Naive thymus-derived CD4-positive, alpha-beta T cell (primary cell): ENCODE measurements at regions of chr14 and their contacts with region 1.

Region 1: GRCh38 chr14:105020815-105021655 is at the start of gene CDCA4:
- DNase-seq: peak; percentile 93 to 98 (median 97)
- ATAC-seq: peak; percentile 91
- H3K4me3 ChIP-seq: peak within 1 kb of the TSS; percentile 97
- H3K4me3 Mint-ChIP-seq: peak within 1 kb of the TSS; percentile 88 to 99 (median 92)
- H3K27ac ChIP-seq: peak within 1 kb of the TSS; percentile 94
- H3K27ac Mint-ChIP-seq: peak within 1 kb of the TSS; percentile 81 to 97 (median 92)
- H3K4me1 ChIP-seq: peaks cover 25 to 54% of the 10 kb centered on the region in 2 donors
- H3K4me1 Mint-ChIP-seq: peaks cover 38 to 62% (median 41%) of the 10 kb centered on the region in 7 donors
- H3K27me3 ChIP-seq: no peaks in the 10 kb centered on the region
- H3K27me3 Mint-ChIP-seq: no peaks in the 10 kb centered on the region
- total RNA-seq, gene CDCA4: 12.7 to 47.8 (median 14.0) TPM

Region 2: GRCh38 chr14:104624939-104625338 is 396.1 kb before region 1 on chr14:
- CTCF ChIA-PET with region 1: no interaction called
- POLR2A ChIA-PET with region 1: no interaction called
- intact Hi-C with region 1: no loop called
- DNase-seq: no peak
- ATAC-seq: no peak
- H3K4me3 ChIP-seq: no peak overlapping the region
- H3K4me3 Mint-ChIP-seq: no peak overlapping the region
- H3K27ac ChIP-seq: no peak overlapping the region
- H3K27ac Mint-ChIP-seq: no peak overlapping the region
- H3K4me1 ChIP-seq: no peaks in the 10 kb centered on the region
- H3K4me1 Mint-ChIP-seq: peaks cover 0 to 2% (median 0%) of the 10 kb centered on the region in 7 donors
- H3K27me3 ChIP-seq: no peaks in the 10 kb centered on the region
- H3K27me3 Mint-ChIP-seq: peaks cover 14 to 35% (median 31%) of the 10 kb centered on the region in 5 donors

Region 3: DNA sequence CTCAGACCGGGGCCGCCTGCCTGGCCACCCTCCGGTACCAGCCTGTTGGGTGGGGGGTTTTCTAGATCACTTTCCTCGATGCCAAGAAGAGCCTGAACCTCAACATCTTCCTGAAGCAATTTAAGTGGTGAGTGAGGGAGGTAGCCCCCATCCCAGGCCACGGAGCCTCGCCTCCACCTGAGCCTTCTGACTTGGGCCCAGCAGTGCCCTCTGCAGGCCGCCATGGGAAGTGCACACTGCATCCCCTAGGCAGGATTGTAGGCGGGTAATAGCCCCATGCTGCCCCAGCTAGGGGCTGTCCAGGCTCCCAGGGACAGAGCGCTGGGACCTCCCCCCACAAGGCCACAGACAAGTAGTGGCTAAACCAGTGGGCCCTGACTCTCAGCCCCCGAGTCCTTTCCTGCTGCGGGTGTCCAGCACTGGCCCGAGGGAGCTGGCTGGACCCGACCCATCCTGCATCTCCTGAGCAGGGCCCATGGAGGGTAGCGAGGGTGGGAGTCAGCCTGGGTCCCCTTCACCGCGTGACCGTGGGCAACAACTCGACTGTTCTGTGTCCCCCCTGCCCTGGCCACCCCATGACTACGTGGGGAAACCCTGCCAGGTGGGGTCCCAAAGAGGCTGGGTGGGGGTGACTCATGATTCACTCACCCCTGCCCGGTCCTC is 312.3 kb before region 1 on chr14:
- CTCF ChIA-PET with region 1: no interaction called
- POLR2A ChIA-PET with region 1: no interaction called
- intact Hi-C with region 1: no loop called
- DNase-seq: peak; percentile 51 to 81 (median 66)
- ATAC-seq: peak; percentile 90
- H3K4me3 ChIP-seq: no peak overlapping the region
- H3K4me3 Mint-ChIP-seq: no peak overlapping the region
- H3K27ac ChIP-seq: no peak overlapping the region
- H3K27ac Mint-ChIP-seq: peak overlapping the region in 5 of 9 donors; percentile 32 to 71 (median 52)
- H3K4me1 ChIP-seq: no peaks in the 10 kb centered on the region
- H3K4me1 Mint-ChIP-seq: peaks cover 0 to 5% (median 4%) of the 10 kb centered on the region in 7 donors
- H3K27me3 ChIP-seq: no peaks in the 10 kb centered on the region
- H3K27me3 Mint-ChIP-seq: no peaks in the 10 kb centered on the region

Region 4: GRCh38 chr14:104800015-104800770 is 220.8 kb before region 1 on chr14:
- CTCF ChIA-PET with region 1: no interaction called
- POLR2A ChIA-PET with region 1: no interaction called
- intact Hi-C with region 1: loop called in 1 of 2 experiments (anchors 1 kb)
- DNase-seq: peak in 8 of 9 donors; percentile 55 to 85 (median 68)
- ATAC-seq: peak; percentile 82
- H3K4me3 ChIP-seq: peak overlapping the region; percentile 41
- H3K4me3 Mint-ChIP-seq: peak overlapping the region; percentile 59 to 90 (median 73)
- H3K27ac ChIP-seq: peak overlapping the region; percentile 70
- H3K27ac Mint-ChIP-seq: peak overlapping the region; percentile 32 to 94 (median 88)
- H3K4me1 ChIP-seq: peaks cover 20 to 27% of the 10 kb centered on the region in 2 donors
- H3K4me1 Mint-ChIP-seq: peaks cover 16 to 47% (median 32%) of the 10 kb centered on the region in 7 donors
- H3K27me3 ChIP-seq: no peaks in the 10 kb centered on the region
- H3K27me3 Mint-ChIP-seq: peaks cover 0 to 2% (median 0%) of the 10 kb centered on the region in 5 donors

Region 5: GRCh38 chr14:104976198-104977007 is 44.6 kb before region 1 on chr14:
- CTCF ChIA-PET with region 1: interaction called, 5 read pairs
- POLR2A ChIA-PET with region 1: interaction called, 6 read pairs
- intact Hi-C with region 1: loop called in 1 of 2 experiments (anchors 1 kb)
- DNase-seq: peak; percentile 67 to 91 (median 83)
- ATAC-seq: peak; percentile 86
- H3K4me3 ChIP-seq: no peak overlapping the region
- H3K4me3 Mint-ChIP-seq: peak overlapping the region; percentile 41 to 92 (median 72)
- H3K27ac ChIP-seq: no peak overlapping the region
- H3K27ac Mint-ChIP-seq: peak overlapping the region in 4 of 9 donors; percentile 3 to 68 (median 33)
- H3K4me1 ChIP-seq: peaks cover 0 to 7% of the 10 kb centered on the region in 2 donors
- H3K4me1 Mint-ChIP-seq: peaks cover 5 to 19% (median 13%) of the 10 kb centered on the region in 7 donors
- H3K27me3 ChIP-seq: peaks cover 0 to 8% of the 10 kb centered on the region in 2 donors
- H3K27me3 Mint-ChIP-seq: peaks cover 8 to 33% (median 16%) of the 10 kb centered on the region in 5 donors

Region 6: GRCh38 chr14:105034314-105035039 is 13.4 kb after region 1 on chr14:
- CTCF ChIA-PET with region 1: no interaction called
- POLR2A ChIA-PET with region 1: interaction called, 11 read pairs
- intact Hi-C with region 1: loop called in 1 of 2 experiments (anchors 1 kb)
- DNase-seq: no peak
- ATAC-seq: peak; percentile 60
- H3K4me3 ChIP-seq: no peak overlapping the region
- H3K4me3 Mint-ChIP-seq: peak overlapping the region in 9 of 10 donors; percentile 79 to 98 (median 95)
- H3K27ac ChIP-seq: no peak overlapping the region
- H3K27ac Mint-ChIP-seq: peak overlapping the region in 8 of 9 donors; percentile 82 to 99 (median 94)
- H3K4me1 ChIP-seq: peaks cover 0 to 6% of the 10 kb centered on the region in 2 donors
- H3K4me1 Mint-ChIP-seq: peaks cover 9 to 31% (median 23%) of the 10 kb centered on the region in 7 donors
- H3K27me3 ChIP-seq: no peaks in the 10 kb centered on the region
- H3K27me3 Mint-ChIP-seq: peaks cover 0 to 7% (median 0%) of the 10 kb centered on the region in 5 donors

Region 7: DNA sequence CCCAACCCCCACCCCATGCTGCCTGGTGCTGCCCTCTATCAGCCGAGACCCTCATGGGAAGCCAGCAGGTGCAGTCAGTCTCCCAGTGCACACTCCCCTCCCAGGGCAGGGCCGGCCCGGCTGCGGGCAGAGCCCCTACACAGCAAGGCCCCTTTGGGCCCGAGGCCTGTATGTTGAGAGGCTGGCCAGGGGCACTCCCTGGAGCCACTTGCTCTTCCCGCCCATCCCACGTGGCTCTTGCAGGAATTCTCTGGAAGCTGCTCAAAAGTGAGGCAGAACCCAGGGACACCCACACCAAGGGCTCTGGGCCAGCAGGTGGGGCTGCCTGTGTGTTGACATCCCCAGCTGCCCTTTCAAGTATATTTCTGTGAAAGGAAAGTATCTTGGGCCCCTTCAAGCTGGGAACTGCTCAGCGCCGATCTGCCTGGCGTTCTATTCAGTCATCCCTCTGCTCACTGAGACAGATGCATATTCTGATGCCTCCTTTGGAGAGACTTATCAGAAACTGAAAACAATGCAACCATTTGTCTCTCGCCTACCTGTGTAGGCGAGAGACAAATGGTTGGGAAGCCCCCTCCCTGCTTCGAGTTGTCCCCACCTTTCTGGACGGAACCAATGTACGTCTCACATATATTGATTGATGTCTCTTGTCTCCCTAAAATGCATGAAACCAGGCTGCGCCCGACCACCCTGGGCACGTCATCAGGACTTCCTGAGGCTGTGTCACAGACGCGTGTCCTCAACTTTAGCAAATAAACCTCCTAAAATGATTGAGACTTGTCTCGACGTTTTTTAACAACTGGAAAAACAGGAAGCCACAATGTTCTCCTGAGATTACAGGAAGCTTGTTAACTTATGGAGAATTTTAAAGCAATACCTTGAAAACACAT is 38.2 kb after region 1 on chr14:
- CTCF ChIA-PET with region 1: no interaction called
- POLR2A ChIA-PET with region 1: interaction called, 5 read pairs
- intact Hi-C with region 1: loop called in 1 of 2 experiments (anchors 1 kb)
- DNase-seq: peak in 7 of 9 donors; percentile 74 to 91 (median 84)
- ATAC-seq: peak; percentile 67
- H3K4me3 ChIP-seq: peak overlapping the region; percentile 74
- H3K4me3 Mint-ChIP-seq: peak overlapping the region; percentile 59 to 96 (median 86)
- H3K27ac ChIP-seq: peak overlapping the region; percentile 96
- H3K27ac Mint-ChIP-seq: peak overlapping the region; percentile 91 to 99 (median 97)
- H3K4me1 ChIP-seq: peaks cover 44 to 58% of the 10 kb centered on the region in 2 donors
- H3K4me1 Mint-ChIP-seq: peaks cover 36 to 59% (median 52%) of the 10 kb centered on the region in 7 donors
- H3K27me3 ChIP-seq: no peaks in the 10 kb centered on the region
- H3K27me3 Mint-ChIP-seq: no peaks in the 10 kb centered on the region

Region 8: GRCh38 chr14:105197271-105197670 is 176.2 kb after region 1 on chr14:
- CTCF ChIA-PET with region 1: no interaction called
- POLR2A ChIA-PET with region 1: no interaction called
- intact Hi-C with region 1: no loop called
- DNase-seq: no peak
- ATAC-seq: peak; percentile 44
- H3K4me3 ChIP-seq: no peak overlapping the region
- H3K4me3 Mint-ChIP-seq: peak overlapping the region in 3 of 10 donors; percentile 8 to 78 (median 27)
- H3K27ac ChIP-seq: no peak overlapping the region
- H3K27ac Mint-ChIP-seq: peak overlapping the region in 1 of 9 donors; percentile 46
- H3K4me1 ChIP-seq: peaks cover 4 to 59% of the 10 kb centered on the region in 2 donors
- H3K4me1 Mint-ChIP-seq: peaks cover 24 to 42% (median 30%) of the 10 kb centered on the region in 7 donors
- H3K27me3 ChIP-seq: peaks cover 6% of the 10 kb centered on the region in 2 donors
- H3K27me3 Mint-ChIP-seq: peaks cover 16 to 50% (median 31%) of the 10 kb centered on the region in 5 donors

Region 9: DNA sequence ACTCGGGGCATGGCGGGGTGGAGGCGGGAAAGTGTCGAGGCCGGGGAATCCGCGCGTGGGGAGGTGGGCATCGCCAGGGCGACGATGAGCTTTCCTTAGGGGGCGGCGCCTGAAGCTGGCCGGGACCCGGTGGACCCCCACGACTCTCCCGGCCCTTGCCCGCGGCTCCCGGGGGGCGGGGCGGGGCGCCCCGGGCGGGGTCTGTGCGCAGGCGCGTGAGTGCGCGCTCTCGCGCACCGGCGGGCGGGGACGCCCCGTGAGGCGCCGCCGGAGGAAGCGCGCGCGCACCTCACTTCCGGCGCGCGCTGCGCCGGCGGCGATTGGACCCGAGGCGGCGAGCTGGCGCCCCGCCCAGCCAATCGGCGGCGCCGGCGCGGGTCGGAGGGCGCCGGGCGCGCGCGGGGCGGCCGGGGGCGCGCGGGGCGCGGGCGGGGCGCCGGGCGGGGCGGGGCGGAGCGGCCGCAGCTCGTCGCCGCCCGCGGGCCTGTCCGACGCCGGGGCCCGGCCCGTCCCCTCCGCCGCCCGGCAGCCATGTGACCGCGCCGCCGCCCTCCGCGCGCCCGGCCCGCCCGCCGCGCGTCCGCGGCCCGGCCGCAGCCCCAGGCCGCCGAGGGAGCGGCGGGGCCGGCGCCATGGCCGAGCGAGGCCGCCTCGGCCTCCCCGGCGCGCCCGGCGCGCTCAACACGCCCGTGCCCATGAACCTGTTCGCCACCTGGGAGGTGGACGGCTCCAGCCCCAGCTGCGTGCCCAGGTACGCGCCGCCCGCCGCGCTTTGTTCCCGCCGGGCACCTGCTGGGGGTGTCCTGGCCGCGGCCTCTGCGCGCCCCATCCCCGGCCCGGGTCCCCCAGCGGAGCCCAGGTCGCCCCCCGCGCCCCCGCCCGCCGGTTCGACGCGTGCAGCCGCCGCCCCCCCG is 293.5 kb after region 1 on chr14 and contains the start of gene PACS2:
- CTCF ChIA-PET with region 1: no interaction called
- POLR2A ChIA-PET with region 1: no interaction called
- intact Hi-C with region 1: loop called in 1 of 2 experiments (anchors 1 kb)
- DNase-seq: peak; percentile 64 to 90 (median 86)
- ATAC-seq: peak; percentile 89
- H3K4me3 ChIP-seq: peak within 1 kb of the TSS; percentile 57
- H3K4me3 Mint-ChIP-seq: peak within 1 kb of the TSS; percentile 80 to 98 (median 89)
- H3K27ac ChIP-seq: peak within 1 kb of the TSS; percentile 68
- H3K27ac Mint-ChIP-seq: peak within 1 kb of the TSS; percentile 74 to 95 (median 89)
- H3K4me1 ChIP-seq: peaks cover 13 to 21% of the 10 kb centered on the region in 2 donors
- H3K4me1 Mint-ChIP-seq: peaks cover 9 to 35% (median 23%) of the 10 kb centered on the region in 7 donors
- H3K27me3 ChIP-seq: no peaks in the 10 kb centered on the region
- H3K27me3 Mint-ChIP-seq: peaks cover 0 to 9% (median 0%) of the 10 kb centered on the region in 5 donors
- total RNA-seq, gene PACS2: 33.9 to 75.4 (median 72.3) TPM